Tibial artery (tissue), 4 donors: ENCODE measurements at regions of chr12 and their contacts with region 1.

Region 1: DNA sequence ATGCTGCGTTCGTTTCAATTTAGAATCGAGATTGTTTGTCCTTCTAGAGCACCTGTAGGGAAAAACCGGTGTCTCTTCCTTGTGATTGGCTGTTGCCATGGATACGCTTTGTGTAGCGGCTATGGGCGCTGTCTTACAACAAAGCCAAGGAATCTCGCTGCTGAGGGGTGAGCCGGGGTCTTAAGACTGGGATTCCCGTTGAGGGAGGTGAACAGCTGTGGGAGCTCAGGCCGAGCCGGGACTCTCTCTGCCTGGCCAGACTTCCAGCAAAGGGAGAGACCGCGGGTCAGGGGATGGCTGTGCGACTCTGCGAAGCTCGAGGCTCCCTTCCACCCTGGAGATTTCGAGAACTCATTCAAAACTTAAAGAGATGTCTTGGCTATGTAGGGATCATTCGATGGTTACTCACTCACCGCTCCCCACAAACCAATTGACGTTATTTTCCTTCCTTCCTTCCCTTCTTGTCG is at the starts of genes LRRIQ1 and TSPAN19:
- DNase-seq: peak; percentile 29 to 62
- H3K4me3 ChIP-seq: peak within 1 kb of the TSS; percentile 29 to 43
- H3K27ac ChIP-seq: no peak within 1 kb of the TSS
- H3K4me1 ChIP-seq: peaks cover 0 to 12% (median 2%) of the 10 kb centered on the region in 4 donors
- H3K27me3 ChIP-seq: peaks cover 0 to 5% of the 10 kb centered on the region in 2 donors
- CTCF ChIP-seq: no peak

Region 2: GRCh38 chr12:84874125-84874824 is 162.0 kb before region 1 on chr12:
- intact Hi-C with region 1: loop called (anchors 10 kb)
- DNase-seq: no peak
- H3K4me3 ChIP-seq: no peak overlapping the region
- H3K27ac ChIP-seq: no peak overlapping the region
- H3K4me1 ChIP-seq: no peaks in the 10 kb centered on the region
- H3K27me3 ChIP-seq: no peaks in the 10 kb centered on the region
- CTCF ChIP-seq: peak; percentile 71 to 80

Region 3: DNA sequence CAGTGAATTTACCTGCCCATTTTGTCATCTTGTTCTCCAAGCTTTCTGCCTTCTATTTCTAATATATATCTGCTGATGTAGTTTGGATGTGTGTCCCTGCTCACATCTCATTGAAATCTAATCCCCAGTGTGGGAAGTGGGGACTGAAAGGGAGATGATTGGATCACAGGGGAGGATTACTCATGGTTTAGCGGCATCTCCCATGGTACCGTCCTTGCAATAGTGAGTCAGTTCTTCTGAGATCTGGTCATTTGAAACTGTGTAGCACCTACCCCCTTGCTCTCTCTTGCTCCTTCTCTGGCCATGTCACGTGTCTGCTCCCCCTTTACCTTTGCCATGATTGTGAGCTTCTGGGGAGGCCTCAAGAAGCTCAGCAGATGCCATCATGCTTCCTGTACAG is 217.5 kb after region 1 on chr12:
- intact Hi-C with region 1: no loop called
- DNase-seq: no peak
- H3K4me3 ChIP-seq: no peak overlapping the region
- H3K27ac ChIP-seq: no peak overlapping the region
- H3K4me1 ChIP-seq: no peaks in the 10 kb centered on the region
- H3K27me3 ChIP-seq: no peaks in the 10 kb centered on the region
- CTCF ChIP-seq: no peak